Natural killer cell (primary cell): ENCODE measurements at regions of chr10 and their contacts with region 1.

Region 1: GRCh38 chr10:27155066-27155754 is at the start of gene MASTL:
- DNase-seq: peak; percentile 96 to 97
- ATAC-seq: peak; percentile 78 to 93 (median 82)
- H3K4me3 ChIP-seq: peak within 1 kb of the TSS; percentile 87
- H3K4me3 Mint-ChIP-seq: peak within 1 kb of the TSS; percentile 100
- H3K27ac ChIP-seq: peak within 1 kb of the TSS; percentile 98
- H3K27ac Mint-ChIP-seq: peak within 1 kb of the TSS; percentile 100
- H3K4me1 ChIP-seq: peaks cover 22% of the 10 kb centered on the region
- H3K4me1 Mint-ChIP-seq: peaks cover 47 to 53% of the 10 kb centered on the region in 2 donors
- H3K27me3 ChIP-seq: no peaks in the 10 kb centered on the region
- H3K27me3 Mint-ChIP-seq: no peaks in the 10 kb centered on the region
- CTCF ChIP-seq: no peak
- total RNA-seq, gene MASTL: 10.1 to 21.2 (median 11.5) TPM

Region 2: GRCh38 chr10:26448706-26449435 is 706.3 kb before region 1 on chr10:
- intact Hi-C with region 1: loop called (anchors 10 kb)
- DNase-seq: peak; percentile 72 to 93
- ATAC-seq: peak; percentile 68 to 84 (median 81)
- H3K4me3 ChIP-seq: peak overlapping the region; percentile 11
- H3K4me3 Mint-ChIP-seq: peak overlapping the region; percentile 84
- H3K27ac ChIP-seq: peak overlapping the region; percentile 96
- H3K27ac Mint-ChIP-seq: peak overlapping the region; percentile 98
- H3K4me1 ChIP-seq: peaks cover 48% of the 10 kb centered on the region
- H3K4me1 Mint-ChIP-seq: peaks cover 82 to 85% of the 10 kb centered on the region in 2 donors
- H3K27me3 ChIP-seq: no peaks in the 10 kb centered on the region
- H3K27me3 Mint-ChIP-seq: no peaks in the 10 kb centered on the region
- CTCF ChIP-seq: peak; percentile 4

Region 3: DNA sequence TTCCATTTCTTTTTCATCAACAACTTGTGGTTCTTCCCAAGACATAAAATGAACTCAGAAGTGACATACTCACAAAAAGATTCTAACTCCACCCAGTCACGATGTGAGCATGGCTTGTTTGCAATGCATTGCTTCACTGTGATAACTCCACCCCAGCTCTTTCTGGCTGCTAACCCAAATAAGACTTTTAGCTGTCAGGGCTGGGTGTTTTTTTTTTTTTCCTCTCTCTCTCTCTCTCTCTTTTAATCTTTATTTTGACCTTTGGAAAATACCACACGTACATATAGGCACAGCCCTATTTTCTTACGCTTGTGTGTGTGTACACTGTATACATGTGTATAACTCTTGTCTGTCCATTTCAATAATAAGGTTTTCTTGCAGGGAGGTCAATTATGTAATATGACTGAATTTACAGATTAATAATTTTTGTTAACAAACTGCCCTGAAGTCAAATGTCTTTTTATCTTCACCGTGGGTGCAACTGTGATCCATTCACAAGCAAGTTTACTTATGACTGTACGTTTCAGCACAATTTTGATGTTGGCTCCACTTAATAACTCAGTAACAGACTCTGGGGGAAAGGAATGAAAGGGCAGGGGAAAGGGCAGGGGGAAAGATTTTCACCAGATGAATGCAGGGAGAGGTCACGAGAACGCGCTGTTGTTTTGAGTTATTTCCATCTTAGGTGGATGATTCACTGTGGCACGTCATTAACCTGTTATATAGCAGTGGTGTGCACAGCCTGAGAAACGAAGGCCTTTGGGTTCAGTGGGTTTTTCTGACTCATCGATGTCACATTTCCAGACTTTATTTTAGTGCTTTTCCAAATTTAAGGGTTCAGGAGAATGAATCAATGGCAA is 668.0 kb before region 1 on chr10:
- intact Hi-C with region 1: loop called (anchors 10 kb)
- DNase-seq: peak; percentile 61 to 87
- ATAC-seq: peak; percentile 72 to 87 (median 86)
- H3K4me3 ChIP-seq: no peak overlapping the region
- H3K4me3 Mint-ChIP-seq: peak overlapping the region; percentile 78
- H3K27ac ChIP-seq: peak overlapping the region; percentile 90
- H3K27ac Mint-ChIP-seq: peak overlapping the region; percentile 96 to 98
- H3K4me1 ChIP-seq: peaks cover 45% of the 10 kb centered on the region
- H3K4me1 Mint-ChIP-seq: peaks cover 64 to 66% of the 10 kb centered on the region in 2 donors
- H3K27me3 ChIP-seq: no peaks in the 10 kb centered on the region
- H3K27me3 Mint-ChIP-seq: no peaks in the 10 kb centered on the region
- CTCF ChIP-seq: no peak

Region 4: GRCh38 chr10:26829810-26830515 is 325.2 kb before region 1 on chr10:
- intact Hi-C with region 1: no loop called
- DNase-seq: no peak
- ATAC-seq: peak; percentile 49 to 69 (median 50)
- H3K4me3 ChIP-seq: no peak overlapping the region
- H3K4me3 Mint-ChIP-seq: peak overlapping the region; percentile 57
- H3K27ac ChIP-seq: peak overlapping the region; percentile 3
- H3K27ac Mint-ChIP-seq: peak overlapping the region; percentile 65 to 79
- H3K4me1 ChIP-seq: peaks cover 6% of the 10 kb centered on the region
- H3K4me1 Mint-ChIP-seq: peaks cover 78 to 82% of the 10 kb centered on the region in 2 donors
- H3K27me3 ChIP-seq: no peaks in the 10 kb centered on the region
- H3K27me3 Mint-ChIP-seq: no peaks in the 10 kb centered on the region
- CTCF ChIP-seq: no peak

Region 5: DNA sequence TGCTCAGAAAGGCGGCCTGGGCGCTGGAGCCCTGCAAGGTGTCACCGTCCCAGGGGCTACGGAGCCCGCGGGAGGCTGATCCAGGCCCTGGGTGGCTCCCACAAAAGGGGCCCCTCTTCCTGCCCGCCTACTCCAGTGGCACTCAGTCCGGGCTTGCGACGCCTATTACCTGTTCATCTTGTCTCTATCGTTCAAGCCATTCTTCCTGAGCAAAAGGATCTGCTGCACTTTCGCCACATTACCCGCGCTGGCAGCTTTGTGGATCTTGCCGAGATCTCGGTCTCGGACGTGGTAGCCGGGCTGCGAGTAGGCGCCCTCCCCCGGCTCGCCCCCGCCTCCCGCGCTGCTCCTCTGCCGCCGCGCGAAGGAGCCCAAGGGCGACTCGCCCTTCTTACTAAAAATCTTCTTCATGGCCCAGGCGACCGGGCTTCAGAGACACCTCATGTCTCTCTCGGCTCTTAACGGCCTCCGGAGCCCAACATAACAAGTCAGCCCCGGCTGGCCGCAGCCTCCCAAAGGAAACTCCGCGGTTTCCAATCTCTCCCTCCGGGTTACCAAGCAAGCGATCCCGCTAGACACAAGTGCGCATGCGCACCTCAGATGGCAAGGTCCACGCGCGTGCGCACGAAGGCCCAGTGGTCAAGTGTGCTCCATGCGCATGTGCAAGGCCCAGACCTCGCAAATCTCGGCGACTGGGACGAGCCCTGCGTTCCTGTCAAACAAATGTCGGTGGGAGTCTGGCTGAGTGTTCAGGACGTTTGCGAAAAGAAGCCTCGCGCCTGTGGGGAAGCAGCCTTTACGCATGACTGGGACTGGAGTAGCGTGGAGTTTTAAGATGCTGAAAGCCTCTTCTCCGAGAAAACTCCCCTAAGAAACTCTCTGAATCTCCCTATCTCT is 55.0 kb before region 1 on chr10 and contains the start of gene ANKRD26:
- intact Hi-C with region 1: loop called (anchors 1 kb)
- DNase-seq: peak; percentile 96 to 100
- ATAC-seq: peak; percentile 84 to 87 (median 85)
- H3K4me3 ChIP-seq: peak within 1 kb of the TSS; percentile 81
- H3K4me3 Mint-ChIP-seq: peak within 1 kb of the TSS; percentile 98
- H3K27ac ChIP-seq: peak within 1 kb of the TSS; percentile 91
- H3K27ac Mint-ChIP-seq: peak within 1 kb of the TSS; percentile 96 to 98
- H3K4me1 ChIP-seq: peaks cover 29% of the 10 kb centered on the region
- H3K4me1 Mint-ChIP-seq: peaks cover 28 to 32% of the 10 kb centered on the region in 2 donors
- H3K27me3 ChIP-seq: no peaks in the 10 kb centered on the region
- H3K27me3 Mint-ChIP-seq: peaks cover 0 to 3% of the 10 kb centered on the region in 2 donors
- CTCF ChIP-seq: no peak
- total RNA-seq, gene ANKRD26: 7.0 to 10.8 (median 9.2) TPM

Region 6: GRCh38 chr10:27223964-27224363 is 68.8 kb after region 1 on chr10:
- intact Hi-C with region 1: loop called (anchors 5 kb)
- DNase-seq: peak in 1 of 2 donors; percentile 79
- ATAC-seq: no peak
- H3K4me3 ChIP-seq: no peak overlapping the region
- H3K4me3 Mint-ChIP-seq: peak overlapping the region; percentile 86
- H3K27ac ChIP-seq: no peak overlapping the region
- H3K27ac Mint-ChIP-seq: peak overlapping the region; percentile 40 to 86
- H3K4me1 ChIP-seq: peaks cover 32% of the 10 kb centered on the region
- H3K4me1 Mint-ChIP-seq: peaks cover 26 to 29% of the 10 kb centered on the region in 2 donors
- H3K27me3 ChIP-seq: no peaks in the 10 kb centered on the region
- H3K27me3 Mint-ChIP-seq: no peaks in the 10 kb centered on the region
- CTCF ChIP-seq: peak; percentile 72

Region 7: DNA sequence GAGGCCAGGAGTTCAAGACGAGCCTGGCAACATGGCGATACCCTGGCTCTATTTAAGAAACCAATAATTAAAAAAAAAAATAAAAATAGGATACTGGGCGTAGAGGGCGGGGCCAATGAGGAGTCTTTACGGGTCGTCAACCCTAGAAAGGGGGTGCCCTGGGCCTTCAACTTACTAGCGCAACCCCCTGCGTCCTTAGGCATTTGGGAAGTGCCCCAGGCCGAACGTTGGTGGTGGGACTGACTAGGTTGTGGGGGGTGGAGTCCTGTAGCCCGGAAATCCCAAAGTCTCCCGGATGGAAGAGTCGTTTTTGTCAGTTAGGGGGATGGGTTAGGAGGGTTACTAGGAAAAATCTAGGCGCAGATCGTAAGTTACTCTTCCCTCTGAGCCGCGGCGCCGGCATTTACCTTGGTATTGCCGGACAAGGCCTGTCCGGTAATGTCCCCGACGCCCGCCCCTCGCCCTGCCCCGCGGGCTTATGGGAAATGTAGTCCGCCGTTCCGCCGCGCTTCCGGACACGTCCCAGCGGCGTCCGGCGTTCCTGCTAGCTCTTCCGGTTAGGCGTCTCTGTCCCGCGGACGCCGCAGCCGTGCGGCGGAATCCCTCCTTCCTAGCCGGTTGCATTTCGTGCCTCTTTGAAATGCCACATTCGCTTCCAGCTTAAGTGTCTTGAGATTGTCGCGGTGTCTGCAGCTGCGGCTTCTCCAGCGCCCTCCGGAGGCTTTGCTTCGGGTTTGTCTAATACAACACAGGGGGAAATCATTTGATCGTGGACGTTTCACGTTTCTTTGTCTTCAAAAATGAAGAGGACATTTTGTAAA is 86.7 kb after region 1 on chr10:
- intact Hi-C with region 1: loop called (anchors 1 kb)
- DNase-seq: peak; percentile 86 to 95
- ATAC-seq: peak; percentile 76 to 88 (median 82)
- H3K4me3 ChIP-seq: peak overlapping the region; percentile 81
- H3K4me3 Mint-ChIP-seq: peak overlapping the region; percentile 95
- H3K27ac ChIP-seq: peak overlapping the region; percentile 87
- H3K27ac Mint-ChIP-seq: peak overlapping the region; percentile 98
- H3K4me1 ChIP-seq: peaks cover 35% of the 10 kb centered on the region
- H3K4me1 Mint-ChIP-seq: peaks cover 41 to 44% of the 10 kb centered on the region in 2 donors
- H3K27me3 ChIP-seq: no peaks in the 10 kb centered on the region
- H3K27me3 Mint-ChIP-seq: no peaks in the 10 kb centered on the region
- CTCF ChIP-seq: peak; percentile 14

Region 8: GRCh38 chr10:28532383-28533175 is 1377.4 kb after region 1 on chr10 and contains the start of gene WAC:
- intact Hi-C with region 1: loop called (anchors 5 kb)
- DNase-seq: peak; percentile 97 to 98
- ATAC-seq: peak; percentile 77 to 92 (median 81)
- H3K4me3 ChIP-seq: peak within 1 kb of the TSS; percentile 83
- H3K4me3 Mint-ChIP-seq: peak within 1 kb of the TSS; percentile 100
- H3K27ac ChIP-seq: peak within 1 kb of the TSS; percentile 97
- H3K27ac Mint-ChIP-seq: peak within 1 kb of the TSS; percentile 100
- H3K4me1 ChIP-seq: peaks cover 18% of the 10 kb centered on the region
- H3K4me1 Mint-ChIP-seq: peaks cover 59 to 81% of the 10 kb centered on the region in 2 donors
- H3K27me3 ChIP-seq: no peaks in the 10 kb centered on the region
- H3K27me3 Mint-ChIP-seq: no peaks in the 10 kb centered on the region
- CTCF ChIP-seq: no peak
- total RNA-seq, gene WAC: 225 to 245 (median 226) TPM